CD4-positive, alpha-beta memory T cell (primary cell): ENCODE measurements at regions of chr5 and their contacts with region 1.

Region 1: DNA sequence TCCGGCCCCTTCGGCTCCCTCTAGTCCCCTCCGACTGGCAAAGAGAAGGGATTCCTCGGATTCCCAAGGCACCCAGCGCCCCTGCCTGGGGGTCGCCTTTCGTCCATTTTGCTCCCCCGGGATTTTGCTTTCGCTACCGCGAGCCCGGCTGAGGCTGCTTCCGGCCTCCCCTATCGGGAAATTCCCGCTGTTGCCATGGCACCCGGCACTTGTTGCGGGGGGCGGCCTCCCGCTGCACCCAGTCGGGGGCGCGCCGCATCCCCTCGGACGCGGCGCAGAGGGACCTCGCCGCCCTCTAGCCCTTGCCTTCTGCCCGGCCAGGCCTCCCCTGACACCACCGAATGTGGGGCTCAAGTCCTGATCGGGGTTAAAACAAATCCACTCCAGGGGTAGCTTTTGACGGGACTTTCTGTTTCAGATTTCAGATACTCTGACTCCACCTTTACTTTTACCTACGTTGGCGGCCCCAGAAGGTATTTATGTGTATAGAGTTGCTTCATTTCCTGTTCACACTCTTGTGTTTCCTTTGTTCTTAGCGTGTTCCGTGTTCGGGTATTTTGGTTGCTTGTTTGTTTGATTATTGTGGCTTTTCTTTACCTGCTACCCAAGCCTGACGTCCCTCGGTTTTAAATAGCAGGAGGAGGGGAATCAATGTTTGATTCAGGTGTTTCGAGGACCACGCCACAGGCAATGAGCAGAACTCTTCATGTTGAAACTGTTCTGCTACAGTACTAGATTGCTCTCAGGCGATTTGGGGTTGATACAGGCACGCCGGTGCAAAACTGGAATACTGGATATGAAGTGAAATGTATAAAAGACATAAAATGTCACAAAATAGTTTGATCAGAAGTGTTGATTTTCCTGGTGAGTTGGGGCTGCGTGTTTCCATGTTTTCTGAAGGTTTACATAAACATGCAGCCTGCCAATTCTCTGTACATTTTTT is 1.5 kb downstream of the PARP8 start:
- DNase-seq: peak; percentile 88 to 94 (median 91)
- H3K4me3 ChIP-seq: peak overlapping the region; percentile 65 to 68
- H3K4me3 Mint-ChIP-seq: peak overlapping the region; percentile 91 to 98 (median 96)
- H3K27ac ChIP-seq: peak overlapping the region; percentile 99
- H3K27ac Mint-ChIP-seq: peak overlapping the region; percentile 96 to 100 (median 99)
- H3K4me1 ChIP-seq: peaks cover 51% of the 10 kb centered on the region
- H3K4me1 Mint-ChIP-seq: peaks cover 32 to 69% (median 44%) of the 10 kb centered on the region in 4 donors
- H3K27me3 ChIP-seq: no peaks in the 10 kb centered on the region
- H3K27me3 Mint-ChIP-seq: peaks cover 0 to 4% of the 10 kb centered on the region in 2 donors

Region 2: GRCh38 chr5:50440651-50441492 is 227.1 kb before region 1 on chr5 and contains the start of gene EMB:
- CTCF ChIA-PET with region 1: interaction called, 8 read pairs
- POLR2A ChIA-PET with region 1: interaction called, 66 read pairs
- intact Hi-C with region 1: loop called (anchors 1 kb)
- DNase-seq: peak; percentile 83 to 85 (median 84)
- H3K4me3 ChIP-seq: peak within 1 kb of the TSS; percentile 63 to 76
- H3K4me3 Mint-ChIP-seq: peak within 1 kb of the TSS; percentile 94 to 99 (median 98)
- H3K27ac ChIP-seq: peak within 1 kb of the TSS; percentile 75
- H3K27ac Mint-ChIP-seq: peak within 1 kb of the TSS; percentile 94 to 98 (median 96)
- H3K4me1 ChIP-seq: peaks cover 74% of the 10 kb centered on the region
- H3K4me1 Mint-ChIP-seq: peaks cover 38 to 90% (median 64%) of the 10 kb centered on the region in 4 donors
- H3K27me3 ChIP-seq: no peaks in the 10 kb centered on the region
- H3K27me3 Mint-ChIP-seq: no peaks in the 10 kb centered on the region
- total RNA-seq, gene EMB: 264 to 277 TPM

Region 3: DNA sequence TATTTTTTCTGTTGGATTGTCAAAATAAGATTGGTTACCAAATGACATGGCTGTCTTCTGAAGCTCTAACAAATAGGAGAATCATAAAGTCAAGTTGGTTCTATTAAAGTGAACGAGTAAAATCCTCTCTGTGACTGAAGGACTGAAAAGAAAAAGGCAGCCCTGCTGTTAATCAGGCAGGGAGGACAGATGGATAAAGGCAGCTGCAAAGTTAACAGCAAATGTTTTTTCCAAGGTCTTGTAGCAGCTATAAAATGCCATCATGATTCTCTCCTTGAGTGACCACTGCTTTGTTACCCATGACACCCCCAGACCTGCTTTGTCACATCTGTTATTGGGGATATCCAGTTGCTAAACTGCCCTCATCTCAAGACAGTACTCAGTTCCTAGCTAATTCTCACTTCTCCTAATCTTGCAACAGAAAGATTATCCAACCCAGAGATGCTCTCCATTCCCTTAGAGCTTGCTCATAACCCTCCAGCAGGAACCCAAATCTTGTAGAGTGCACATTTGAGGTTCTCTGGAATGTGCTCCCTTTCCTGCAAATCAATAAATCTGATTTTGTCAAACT is 91.2 kb before region 1 on chr5:
- CTCF ChIA-PET with region 1: no interaction called
- POLR2A ChIA-PET with region 1: interaction called, 16 read pairs
- intact Hi-C with region 1: no loop called
- DNase-seq: no peak
- H3K4me3 ChIP-seq: no peak overlapping the region
- H3K4me3 Mint-ChIP-seq: peak overlapping the region in 5 of 8 donors; percentile 10 to 82 (median 32)
- H3K27ac ChIP-seq: no peak overlapping the region
- H3K27ac Mint-ChIP-seq: peak overlapping the region in 3 of 7 donors; percentile 20 to 89 (median 53)
- H3K4me1 ChIP-seq: peaks cover 22% of the 10 kb centered on the region
- H3K4me1 Mint-ChIP-seq: peaks cover 19 to 42% (median 32%) of the 10 kb centered on the region in 4 donors
- H3K27me3 ChIP-seq: no peaks in the 10 kb centered on the region
- H3K27me3 Mint-ChIP-seq: no peaks in the 10 kb centered on the region

Region 4: GRCh38 chr5:50606179-50606578 is 61.7 kb before region 1 on chr5:
- CTCF ChIA-PET with region 1: no interaction called
- POLR2A ChIA-PET with region 1: interaction called, 14 read pairs
- intact Hi-C with region 1: no loop called
- DNase-seq: no peak
- H3K4me3 ChIP-seq: no peak overlapping the region
- H3K4me3 Mint-ChIP-seq: no peak overlapping the region
- H3K27ac ChIP-seq: no peak overlapping the region
- H3K27ac Mint-ChIP-seq: no peak overlapping the region
- H3K4me1 ChIP-seq: peaks cover 8% of the 10 kb centered on the region
- H3K4me1 Mint-ChIP-seq: peaks cover 9 to 30% (median 20%) of the 10 kb centered on the region in 4 donors
- H3K27me3 ChIP-seq: no peaks in the 10 kb centered on the region
- H3K27me3 Mint-ChIP-seq: peaks cover 0 to 1% of the 10 kb centered on the region in 2 donors

Region 5: GRCh38 chr5:50711273-50711672 is 43.3 kb after region 1 on chr5:
- CTCF ChIA-PET with region 1: interaction called, 3 read pairs
- POLR2A ChIA-PET with region 1: interaction called, 6 read pairs
- intact Hi-C with region 1: loop called (anchors 1 kb)
- DNase-seq: peak; percentile 69 to 87 (median 77)
- H3K4me3 ChIP-seq: peak overlapping the region; percentile 1 to 33
- H3K4me3 Mint-ChIP-seq: peak overlapping the region; percentile 79 to 91 (median 85)
- H3K27ac ChIP-seq: peak overlapping the region; percentile 65
- H3K27ac Mint-ChIP-seq: peak overlapping the region; percentile 90 to 96 (median 95)
- H3K4me1 ChIP-seq: peaks cover 94% of the 10 kb centered on the region
- H3K4me1 Mint-ChIP-seq: peaks cover 61 to 89% (median 74%) of the 10 kb centered on the region in 4 donors
- H3K27me3 ChIP-seq: no peaks in the 10 kb centered on the region
- H3K27me3 Mint-ChIP-seq: no peaks in the 10 kb centered on the region

Region 6: GRCh38 chr5:50744776-50745175 is 76.9 kb after region 1 on chr5:
- CTCF ChIA-PET with region 1: interaction called, 3 read pairs
- POLR2A ChIA-PET with region 1: interaction called, 25 read pairs
- intact Hi-C with region 1: loop called (anchors 1 kb)
- DNase-seq: peak; percentile 25 to 47 (median 32)
- H3K4me3 ChIP-seq: peak overlapping the region; percentile 6 to 32
- H3K4me3 Mint-ChIP-seq: peak overlapping the region; percentile 78 to 94 (median 89)
- H3K27ac ChIP-seq: peak overlapping the region; percentile 56
- H3K27ac Mint-ChIP-seq: peak overlapping the region; percentile 80 to 97 (median 94)
- H3K4me1 ChIP-seq: peaks cover 82% of the 10 kb centered on the region
- H3K4me1 Mint-ChIP-seq: peaks cover 64 to 85% (median 71%) of the 10 kb centered on the region in 4 donors
- H3K27me3 ChIP-seq: no peaks in the 10 kb centered on the region
- H3K27me3 Mint-ChIP-seq: no peaks in the 10 kb centered on the region

Region 7: GRCh38 chr5:50823568-50823967 is 155.6 kb after region 1 on chr5:
- CTCF ChIA-PET with region 1: no interaction called
- POLR2A ChIA-PET with region 1: no interaction called
- intact Hi-C with region 1: no loop called
- DNase-seq: no peak
- H3K4me3 ChIP-seq: no peak overlapping the region
- H3K4me3 Mint-ChIP-seq: no peak overlapping the region
- H3K27ac ChIP-seq: no peak overlapping the region
- H3K27ac Mint-ChIP-seq: no peak overlapping the region
- H3K4me1 ChIP-seq: no peaks in the 10 kb centered on the region
- H3K4me1 Mint-ChIP-seq: peaks cover 0 to 24% (median 10%) of the 10 kb centered on the region in 4 donors
- H3K27me3 ChIP-seq: no peaks in the 10 kb centered on the region
- H3K27me3 Mint-ChIP-seq: no peaks in the 10 kb centered on the region

Region 8: DNA sequence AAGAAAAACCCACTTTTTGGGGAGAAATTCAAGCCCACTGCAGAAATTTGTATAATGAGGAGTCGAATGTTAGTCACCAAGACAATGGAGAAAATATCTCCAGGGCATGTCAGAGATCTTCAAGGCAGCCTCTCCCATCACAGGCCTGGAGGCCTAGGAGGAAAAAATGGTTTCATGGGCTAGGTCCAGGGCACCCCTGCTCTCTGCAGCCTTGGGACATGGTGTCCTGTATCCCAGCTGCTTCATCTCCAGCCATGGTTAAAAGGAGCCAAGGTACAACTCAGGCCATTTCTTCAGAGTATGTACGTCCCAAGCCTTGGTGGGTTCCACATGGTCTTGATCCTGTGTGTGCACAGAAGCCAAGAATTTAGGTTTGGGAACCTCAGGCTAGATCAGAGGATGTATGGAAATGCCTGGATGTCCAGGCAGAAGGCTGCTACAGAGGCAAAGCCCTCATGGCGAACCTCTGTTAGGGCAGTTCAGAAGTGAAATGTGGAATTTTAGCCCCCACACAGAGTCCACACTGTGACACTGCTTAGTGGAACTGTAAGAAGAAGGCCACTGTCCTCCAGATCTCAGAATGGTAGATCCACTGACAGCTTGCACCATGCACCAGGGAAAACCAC is 1276.7 kb after region 1 on chr5:
- CTCF ChIA-PET with region 1: no interaction called
- POLR2A ChIA-PET with region 1: no interaction called
- intact Hi-C with region 1: no loop called
- DNase-seq: no peak
- H3K4me3 ChIP-seq: no peak overlapping the region
- H3K4me3 Mint-ChIP-seq: no peak overlapping the region
- H3K27ac ChIP-seq: no peak overlapping the region
- H3K27ac Mint-ChIP-seq: no peak overlapping the region
- H3K4me1 ChIP-seq: no peaks in the 10 kb centered on the region
- H3K4me1 Mint-ChIP-seq: no peaks in the 10 kb centered on the region
- H3K27me3 ChIP-seq: no peaks in the 10 kb centered on the region
- H3K27me3 Mint-ChIP-seq: no peaks in the 10 kb centered on the region

Region 9: DNA sequence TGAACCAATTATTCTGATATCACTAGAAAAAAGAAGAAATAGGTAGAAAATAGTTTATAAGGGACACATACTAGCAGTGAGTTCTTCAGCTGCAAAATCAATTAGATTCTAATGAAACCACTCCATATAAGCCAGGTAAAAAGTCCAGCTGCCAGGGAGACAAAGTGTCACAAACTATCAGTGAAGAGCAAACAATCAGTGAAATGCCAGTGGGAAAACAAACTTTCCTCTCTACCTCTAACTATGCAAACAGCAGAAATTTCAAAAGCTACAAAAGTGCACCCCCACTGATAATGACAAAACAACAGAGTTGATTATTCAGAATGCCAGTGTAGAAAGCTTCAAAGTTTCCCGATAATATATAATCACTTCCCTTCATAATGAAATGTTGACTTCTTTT is 1482.6 kb after region 1 on chr5:
- CTCF ChIA-PET with region 1: no interaction called
- POLR2A ChIA-PET with region 1: no interaction called
- intact Hi-C with region 1: no loop called
- DNase-seq: no peak
- H3K4me3 ChIP-seq: no peak overlapping the region
- H3K4me3 Mint-ChIP-seq: no peak overlapping the region
- H3K27ac ChIP-seq: no peak overlapping the region
- H3K27ac Mint-ChIP-seq: no peak overlapping the region
- H3K4me1 ChIP-seq: no peaks in the 10 kb centered on the region
- H3K4me1 Mint-ChIP-seq: no peaks in the 10 kb centered on the region
- H3K27me3 ChIP-seq: no peaks in the 10 kb centered on the region
- H3K27me3 Mint-ChIP-seq: no peaks in the 10 kb centered on the region